Mammary epithelial cell (primary cell): ENCODE measurements at regions of chr10 and their contacts with region 1.

Region 1: GRCh38 chr10:88810196-88810961 is 7.8 kb downstream of the LIPM start:
- DNase-seq: peak; percentile 65
- H3K4me3 ChIP-seq: no peak overlapping the region
- H3K27ac ChIP-seq: no peak overlapping the region
- H3K4me1 ChIP-seq: peaks cover 10% of the 10 kb centered on the region
- H3K27me3 ChIP-seq: no peaks in the 10 kb centered on the region
- CTCF ChIP-seq: peak; percentile 85 to 87

Region 2: DNA sequence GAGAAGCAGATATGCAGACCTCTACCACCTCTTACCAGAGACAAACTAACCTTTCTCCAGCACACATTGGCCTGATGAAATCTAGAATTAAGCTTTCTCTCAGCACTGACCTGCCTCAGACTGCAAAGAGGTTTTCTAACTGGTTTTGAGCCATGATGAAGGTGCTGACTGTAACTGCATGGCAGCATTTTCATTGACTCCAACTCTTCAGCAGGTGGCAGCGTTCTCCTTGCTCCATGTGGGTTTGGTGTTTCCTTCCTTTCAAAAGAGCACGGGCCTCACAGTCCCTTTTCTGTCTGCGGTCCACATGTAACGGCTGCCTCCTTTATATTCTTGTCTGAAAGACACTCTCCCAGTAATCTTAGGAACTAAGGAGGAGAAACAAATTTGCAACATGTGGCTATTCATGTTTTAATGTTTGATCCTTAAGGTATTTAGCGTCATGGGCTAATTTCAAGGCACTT is 959.6 kb before region 1 on chr10:
- CTCF ChIA-PET with region 1: no interaction called
- dilution Hi-C with region 1: no loop called
- in situ Hi-C with region 1: no loop called
- intact Hi-C with region 1: loop called (anchors 2 kb)
- DNase-seq: peak; percentile 64
- H3K4me3 ChIP-seq: no peak overlapping the region
- H3K27ac ChIP-seq: no peak overlapping the region
- H3K4me1 ChIP-seq: peaks cover 20% of the 10 kb centered on the region
- H3K27me3 ChIP-seq: no peaks in the 10 kb centered on the region
- CTCF ChIP-seq: peak; percentile 59 to 76

Region 3: DNA sequence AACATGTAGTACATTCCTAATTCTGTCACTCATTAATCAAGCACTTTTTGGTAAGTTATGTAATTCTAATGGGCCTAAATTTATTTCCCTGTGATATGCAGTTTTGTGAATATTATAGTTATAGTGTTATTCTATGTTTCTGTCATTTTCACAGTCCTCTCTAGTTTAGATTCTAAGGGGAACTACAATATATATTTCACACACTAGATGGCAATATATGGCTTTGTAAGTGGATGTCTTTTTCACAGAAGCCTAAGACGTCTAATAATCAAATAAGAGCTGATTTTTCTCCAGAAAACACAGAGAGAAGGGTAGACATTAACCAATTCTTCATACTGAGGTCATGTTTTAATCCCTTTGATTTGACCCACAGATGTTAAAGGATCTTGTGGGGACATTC is 245.3 kb before region 1 on chr10:
- CTCF ChIA-PET with region 1: interaction called, 3 read pairs
- dilution Hi-C with region 1: no loop called
- in situ Hi-C with region 1: loop called (anchors 10 kb)
- intact Hi-C with region 1: loop called (anchors 1 kb)
- DNase-seq: peak; percentile 13
- H3K4me3 ChIP-seq: no peak overlapping the region
- H3K27ac ChIP-seq: no peak overlapping the region
- H3K4me1 ChIP-seq: no peaks in the 10 kb centered on the region
- H3K27me3 ChIP-seq: no peaks in the 10 kb centered on the region
- CTCF ChIP-seq: peak; percentile 40 to 43

Region 4: GRCh38 chr10:88582806-88583583 is 227.4 kb before region 1 on chr10 and contains the start of gene RNLS:
- CTCF ChIA-PET with region 1: no interaction called
- dilution Hi-C with region 1: no loop called
- in situ Hi-C with region 1: no loop called
- intact Hi-C with region 1: loop called (anchors 5 kb)
- DNase-seq: peak; percentile 33
- H3K4me3 ChIP-seq: peak within 1 kb of the TSS; percentile 44 to 68 (median 58)
- H3K27ac ChIP-seq: no peak within 1 kb of the TSS
- H3K4me1 ChIP-seq: peaks cover 9% of the 10 kb centered on the region
- H3K27me3 ChIP-seq: no peaks in the 10 kb centered on the region
- CTCF ChIP-seq: peak; percentile 52 to 74
- total RNA-seq, gene RNLS: 3.3 to 13.0 TPM

Region 5: DNA sequence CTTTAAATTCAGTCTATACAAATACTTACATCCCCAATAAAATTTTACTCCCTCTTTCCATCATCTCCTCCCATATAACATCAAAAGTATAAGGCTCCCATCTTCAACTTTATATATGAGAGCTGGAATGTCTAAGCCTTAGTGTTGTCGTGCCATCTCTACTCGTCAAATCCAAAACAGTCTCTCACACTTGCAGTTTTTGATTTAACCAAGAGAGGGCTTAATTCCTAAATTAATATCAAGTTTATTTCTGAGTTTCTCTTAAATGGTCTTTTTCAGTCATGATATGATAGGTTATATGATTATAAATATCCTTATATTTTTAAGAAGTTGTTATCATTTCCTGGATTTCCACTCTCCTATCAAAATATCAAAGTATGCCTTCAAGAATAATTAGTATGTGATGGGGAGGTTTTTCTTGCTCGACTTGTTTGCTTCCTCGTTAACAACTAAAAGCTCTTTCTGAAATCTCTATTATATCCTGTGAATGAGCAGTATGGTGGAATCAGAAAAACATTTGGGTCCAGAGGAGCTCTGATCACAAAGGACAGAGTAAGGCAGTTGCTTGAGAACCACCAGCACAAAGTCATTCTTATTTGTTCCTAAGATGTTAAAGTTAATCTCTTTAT is 116.9 kb before region 1 on chr10:
- CTCF ChIA-PET with region 1: interaction called, 11 read pairs
- dilution Hi-C with region 1: no loop called
- in situ Hi-C with region 1: loop called (anchors 5 to 10 kb)
- intact Hi-C with region 1: loop called (anchors 1 kb)
- DNase-seq: no peak
- H3K4me3 ChIP-seq: no peak overlapping the region
- H3K27ac ChIP-seq: no peak overlapping the region
- H3K4me1 ChIP-seq: no peaks in the 10 kb centered on the region
- H3K27me3 ChIP-seq: no peaks in the 10 kb centered on the region
- CTCF ChIP-seq: peak; percentile 27 to 39

Region 6: GRCh38 chr10:88791924-88792323 is 18.5 kb before region 1 on chr10:
- CTCF ChIA-PET with region 1: no interaction called
- dilution Hi-C with region 1: no loop called
- in situ Hi-C with region 1: no loop called
- intact Hi-C with region 1: no loop called
- DNase-seq: peak; percentile 25
- H3K4me3 ChIP-seq: no peak overlapping the region
- H3K27ac ChIP-seq: no peak overlapping the region
- H3K4me1 ChIP-seq: peaks cover 13% of the 10 kb centered on the region
- H3K27me3 ChIP-seq: peaks cover 5% of the 10 kb centered on the region
- CTCF ChIP-seq: peak; percentile 69 to 73